IMR-90 (cell line): ENCODE measurements at regions of chr5 and their contacts with region 1.

Region 1: GRCh38 chr5:159156426-159157238 is 52.7 kb downstream of the RNF145 start:
- DNase-seq: peak; percentile 83
- ATAC-seq: peak; percentile 70
- H3K4me3 ChIP-seq: no peak overlapping the region
- H3K27ac ChIP-seq: no peak overlapping the region
- H3K4me1 ChIP-seq: peaks cover 5% of the 10 kb centered on the region
- H3K27me3 ChIP-seq: no peaks in the 10 kb centered on the region
- CTCF ChIP-seq: peak; percentile 84
- POLR2A ChIP-seq: no peak
- RAD21 ChIP-seq: peak; percentile 89

Region 2: DNA sequence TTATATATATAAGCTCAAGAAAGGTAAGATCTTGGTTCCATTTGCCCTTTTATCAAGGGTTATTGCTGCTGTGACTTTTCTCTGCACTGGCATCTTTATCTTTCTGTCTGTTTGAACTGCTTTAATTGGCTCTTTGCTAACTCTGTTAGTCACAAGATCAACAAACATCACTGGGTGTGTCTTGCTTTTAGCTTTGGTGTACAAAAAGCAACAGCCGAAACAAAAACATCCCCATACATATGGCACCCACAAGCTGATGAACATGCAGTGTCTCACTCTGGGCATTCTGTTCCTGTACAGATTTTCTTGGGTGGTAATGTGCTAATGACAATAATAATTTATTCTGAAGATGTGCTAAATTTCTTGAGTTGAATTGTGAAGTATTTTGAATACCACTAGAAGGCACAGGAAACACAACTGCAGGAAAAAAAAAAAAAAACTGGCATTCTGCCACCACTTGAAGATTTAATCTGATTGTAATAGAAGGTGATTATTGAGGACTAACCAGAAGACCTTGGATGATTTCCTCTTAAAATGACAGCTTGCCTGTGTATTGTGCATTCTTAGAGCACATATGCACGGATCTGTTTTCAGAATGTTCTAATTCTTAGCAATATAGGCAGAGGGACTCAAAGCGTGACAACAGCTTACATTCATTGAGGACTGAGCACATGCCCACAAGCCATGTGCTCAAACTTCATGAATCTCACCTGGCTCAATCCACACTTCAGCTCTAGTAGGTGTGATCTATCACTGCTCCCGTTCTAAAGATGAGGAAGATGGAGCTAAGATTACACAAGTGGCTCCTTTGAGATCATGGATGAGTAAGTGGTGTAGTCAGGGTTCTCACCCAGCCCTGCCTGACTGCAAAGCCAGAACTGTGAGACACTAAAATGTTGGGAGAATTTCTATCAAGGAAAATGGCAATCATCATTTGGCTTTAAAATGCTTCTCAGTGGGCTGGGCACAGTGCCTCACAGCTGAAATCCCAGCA is 153.3 kb before region 1 on chr5:
- CTCF ChIA-PET with region 1: no interaction called
- POLR2A ChIA-PET with region 1: no interaction called
- dilution Hi-C with region 1: no loop called
- in situ Hi-C with region 1: no loop called
- intact Hi-C with region 1: no loop called
- DNase-seq: peak; percentile 37
- ATAC-seq: no peak
- H3K4me3 ChIP-seq: no peak overlapping the region
- H3K27ac ChIP-seq: no peak overlapping the region
- H3K4me1 ChIP-seq: no peaks in the 10 kb centered on the region
- H3K27me3 ChIP-seq: no peaks in the 10 kb centered on the region
- CTCF ChIP-seq: no peak
- POLR2A ChIP-seq: no peak
- RAD21 ChIP-seq: no peak

Region 3: DNA sequence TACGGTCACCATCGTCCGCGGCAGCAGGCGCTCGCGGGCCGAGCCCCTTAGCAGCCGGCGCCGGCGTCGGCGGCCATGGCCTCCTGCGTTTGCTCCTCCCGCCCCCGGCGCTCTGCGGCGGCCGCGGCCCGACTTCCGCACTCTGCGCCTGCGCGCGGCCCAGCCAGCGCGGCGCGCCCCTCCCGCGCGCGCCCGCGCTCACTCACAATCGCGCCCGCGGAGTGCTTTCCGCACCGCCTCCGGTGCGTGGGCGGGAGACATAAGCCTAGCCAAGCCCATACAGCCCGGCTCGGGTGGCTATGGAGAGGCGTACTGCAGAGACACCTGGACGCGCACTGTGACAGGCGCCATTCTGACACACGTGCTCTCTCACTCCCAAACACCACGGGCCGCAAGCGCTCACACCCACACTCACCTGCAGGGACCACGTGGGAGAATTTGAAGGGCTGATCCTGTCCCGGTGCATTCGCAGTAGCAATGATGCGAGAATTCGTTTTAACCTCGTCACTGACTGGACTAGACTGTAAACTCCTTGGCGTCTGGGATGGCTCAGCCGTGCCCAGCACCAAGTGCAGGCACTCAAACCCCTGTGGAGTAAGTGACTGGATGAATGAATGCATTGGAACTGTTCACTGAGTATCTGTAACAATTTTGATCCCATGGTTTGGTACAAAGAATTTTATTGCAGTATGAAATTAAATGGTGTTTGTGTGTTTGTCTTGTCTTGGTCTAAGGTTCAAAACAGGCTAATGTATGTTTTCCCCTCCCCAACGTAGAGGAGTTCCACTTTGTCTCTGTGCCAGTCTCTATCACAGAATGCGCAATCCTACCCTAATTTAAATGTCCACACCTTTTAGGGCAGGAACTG is 53.0 kb after region 1 on chr5 and contains the start of gene RNF145:
- CTCF ChIA-PET with region 1: interaction called, 5 read pairs
- POLR2A ChIA-PET with region 1: interaction called, 6 read pairs
- dilution Hi-C with region 1: no loop called
- in situ Hi-C with region 1: loop called (anchors 5 kb)
- intact Hi-C with region 1: loop called (anchors 2 kb)
- DNase-seq: peak; percentile 86
- ATAC-seq: peak; percentile 74
- H3K4me3 ChIP-seq: peak within 1 kb of the TSS; percentile 83
- H3K27ac ChIP-seq: peak within 1 kb of the TSS; percentile 100
- H3K4me1 ChIP-seq: 0 out of 2 replicates have a peak, but pooled peaks cover 2% of the 10 kb centered on the region
- H3K27me3 ChIP-seq: no peaks in the 10 kb centered on the region
- CTCF ChIP-seq: no peak
- POLR2A ChIP-seq: peak; percentile 61; the same call in 1 of the 2 replicates
- RAD21 ChIP-seq: 0 out of 2 replicates have a peak, but pooled peaks have one; percentile 4
- total RNA-seq, gene RNF145: 50.0 and 68.0 TPM in 2 replicates

Region 4: DNA sequence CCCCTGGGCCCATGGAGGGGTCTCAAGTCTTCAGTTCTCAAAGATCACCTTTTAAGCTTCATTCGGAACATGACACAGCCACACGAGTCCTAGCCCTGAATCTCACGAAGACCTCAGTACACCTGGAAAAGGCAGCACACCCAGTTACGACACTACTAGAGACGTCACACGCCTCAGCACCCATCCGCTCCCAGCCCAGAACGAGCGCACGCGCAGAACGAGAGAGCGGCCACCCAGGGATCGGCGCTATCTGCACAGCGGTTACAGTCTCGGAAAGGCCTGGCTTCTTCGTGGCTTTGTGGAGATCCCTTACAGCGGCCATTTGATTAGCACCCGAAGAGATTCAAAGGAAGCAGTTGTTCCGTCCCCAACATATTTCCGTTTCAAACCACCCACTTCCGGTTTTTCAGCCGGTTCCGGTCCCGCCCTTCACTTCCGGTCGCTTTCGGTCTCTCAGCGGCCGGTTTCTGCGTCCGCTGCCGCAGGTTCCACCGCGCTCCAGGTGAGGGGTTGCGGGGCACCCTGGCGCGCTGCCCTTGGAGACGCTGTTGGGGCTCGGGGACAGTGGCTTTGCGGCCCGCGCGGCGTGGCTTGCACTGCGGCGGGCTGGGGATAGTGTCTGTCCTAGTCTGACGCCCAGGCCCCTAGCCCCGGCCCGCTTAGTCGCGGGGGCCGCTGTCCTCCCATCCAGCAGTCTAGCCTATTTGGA is 106.4 kb after region 1 on chr5 and contains the start of gene UBLCP1:
- CTCF ChIA-PET with region 1: interaction called, 3 read pairs
- POLR2A ChIA-PET with region 1: no interaction called
- dilution Hi-C with region 1: loop called (anchors 25 kb)
- in situ Hi-C with region 1: loop called (anchors 5 kb)
- intact Hi-C with region 1: loop called (anchors 1 kb)
- DNase-seq: peak; percentile 73
- ATAC-seq: peak; percentile 91
- H3K4me3 ChIP-seq: peak within 1 kb of the TSS; percentile 64
- H3K27ac ChIP-seq: peak within 1 kb of the TSS; percentile 93
- H3K4me1 ChIP-seq: peaks cover 3% of the 10 kb centered on the region; the same call in 1 of the 2 replicates
- H3K27me3 ChIP-seq: no peaks in the 10 kb centered on the region
- CTCF ChIP-seq: no peak
- POLR2A ChIP-seq: peak; percentile 68
- RAD21 ChIP-seq: 0 out of 2 replicates have a peak, but pooled peaks have one; percentile 3
- total RNA-seq, gene UBLCP1: 11.7 and 23.1 TPM in 2 replicates

Region 5: DNA sequence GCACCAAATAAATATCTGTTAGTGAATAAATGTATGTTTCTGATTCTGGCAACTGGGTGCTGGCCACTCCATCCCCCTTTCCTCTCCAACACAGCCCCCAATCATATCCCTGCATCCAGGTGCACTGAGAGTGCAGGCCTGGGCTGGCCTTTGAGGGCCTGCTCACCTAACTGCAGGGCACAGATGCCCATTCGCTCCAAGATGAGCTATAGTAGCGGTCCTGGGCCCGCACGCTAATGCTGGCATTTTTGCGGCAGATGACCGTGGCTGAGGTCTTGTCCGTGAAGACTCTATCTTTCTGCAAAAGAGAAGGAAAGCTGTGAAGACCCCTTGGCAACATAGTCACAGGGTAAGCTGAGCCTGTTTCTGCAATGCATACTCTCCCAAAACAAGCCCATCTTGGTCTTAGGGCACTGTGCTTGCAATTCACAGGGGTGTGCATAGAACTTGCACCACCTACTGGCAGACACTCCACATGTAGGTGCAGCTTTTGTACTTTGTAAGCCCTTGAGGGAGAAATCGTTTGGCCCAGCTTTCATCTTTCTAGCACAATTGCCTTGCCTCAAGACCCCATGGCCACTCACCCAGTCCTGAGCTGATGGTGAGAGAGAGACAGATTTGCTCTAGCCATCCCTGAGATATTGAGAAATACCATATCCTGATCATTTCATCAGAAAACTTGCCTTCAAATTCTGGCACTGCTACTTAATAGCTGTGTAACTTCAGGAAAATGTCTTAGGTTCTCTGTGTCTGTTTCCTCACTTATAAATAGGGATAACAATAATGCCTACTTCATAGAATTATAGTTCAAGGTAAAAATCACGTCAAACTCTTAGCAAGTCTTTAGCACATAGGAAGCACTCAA is 160.1 kb after region 1 on chr5:
- CTCF ChIA-PET with region 1: interaction called, 5 read pairs
- POLR2A ChIA-PET with region 1: no interaction called
- dilution Hi-C with region 1: no loop called
- in situ Hi-C with region 1: no loop called
- intact Hi-C with region 1: loop called (anchors 2 kb)
- DNase-seq: peak; percentile 67
- ATAC-seq: peak; percentile 90
- H3K4me3 ChIP-seq: no peak overlapping the region
- H3K27ac ChIP-seq: no peak overlapping the region
- H3K4me1 ChIP-seq: no peaks in the 10 kb centered on the region
- H3K27me3 ChIP-seq: peaks cover 8% of the 10 kb centered on the region
- CTCF ChIP-seq: peak; percentile 65
- POLR2A ChIP-seq: no peak
- RAD21 ChIP-seq: peak; percentile 61

Region 6: DNA sequence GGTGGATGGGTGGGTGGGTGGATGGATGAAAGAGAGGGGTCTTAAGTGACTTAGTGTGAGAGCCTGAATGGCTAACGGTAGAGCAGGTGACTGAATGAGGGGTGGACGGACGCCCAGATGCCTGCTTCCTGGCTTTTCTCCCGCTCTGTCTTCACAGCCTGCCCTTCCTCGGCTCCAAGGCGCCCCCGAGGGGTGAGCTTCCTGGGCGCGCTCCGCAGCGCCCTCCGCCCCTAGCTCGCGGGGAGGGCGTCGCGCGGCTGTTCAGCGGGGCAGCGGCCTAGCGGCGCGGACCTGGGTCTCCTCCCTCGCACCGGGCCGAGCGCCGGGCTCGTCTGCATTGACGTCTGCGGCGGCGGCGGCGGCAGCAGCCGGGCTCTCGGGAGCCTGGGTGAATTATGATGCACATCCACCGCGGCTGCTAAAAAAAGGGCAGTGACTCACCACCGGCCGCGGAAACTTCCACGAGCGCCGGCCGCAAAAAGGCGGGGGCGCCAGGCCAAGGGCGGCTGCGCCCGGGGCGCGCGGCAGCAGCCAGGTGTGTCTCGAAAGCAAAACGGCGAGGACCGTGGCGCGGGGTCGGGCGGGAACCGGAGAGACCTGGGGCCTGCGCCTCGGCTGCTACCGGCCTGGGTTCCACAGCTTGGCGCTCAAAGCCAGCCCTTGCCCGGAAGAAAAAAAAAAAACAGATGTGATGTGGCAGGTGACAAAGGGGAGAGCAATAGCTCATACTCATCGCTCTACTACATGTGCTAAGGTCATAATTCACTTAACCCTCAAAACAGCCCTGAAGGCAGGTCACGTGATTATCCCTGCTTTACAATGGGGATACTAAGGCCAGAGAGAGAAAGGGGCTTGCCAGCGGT is 616.7 kb after region 1 on chr5:
- CTCF ChIA-PET with region 1: no interaction called
- POLR2A ChIA-PET with region 1: no interaction called
- dilution Hi-C with region 1: no loop called
- in situ Hi-C with region 1: loop called (anchors 25 kb)
- intact Hi-C with region 1: no loop called
- DNase-seq: peak; percentile 90
- ATAC-seq: peak; percentile 97
- H3K4me3 ChIP-seq: peak overlapping the region; percentile 31
- H3K27ac ChIP-seq: peak overlapping the region; percentile 31; the same call in 1 of the 2 replicates
- H3K4me1 ChIP-seq: peaks cover 3% of the 10 kb centered on the region; the same call in 1 of the 2 replicates
- H3K27me3 ChIP-seq: no peaks in the 10 kb centered on the region
- CTCF ChIP-seq: peak; percentile 46
- POLR2A ChIP-seq: peak; percentile 69; the same call in 1 of the 2 replicates
- RAD21 ChIP-seq: peak; percentile 44

Region 7: GRCh38 chr5:159965031-159965837 is 808.6 kb after region 1 on chr5:
- CTCF ChIA-PET with region 1: no interaction called
- POLR2A ChIA-PET with region 1: no interaction called
- dilution Hi-C with region 1: no loop called
- in situ Hi-C with region 1: loop called (anchors 25 kb)
- intact Hi-C with region 1: loop called (anchors 10 kb)
- DNase-seq: peak; percentile 57
- ATAC-seq: peak; percentile 96
- H3K4me3 ChIP-seq: no peak overlapping the region
- H3K27ac ChIP-seq: no peak overlapping the region
- H3K4me1 ChIP-seq: peaks cover 5% of the 10 kb centered on the region
- H3K27me3 ChIP-seq: no peaks in the 10 kb centered on the region
- CTCF ChIP-seq: peak; percentile 71
- POLR2A ChIP-seq: no peak
- RAD21 ChIP-seq: peak; percentile 85